ENCODE measurements at regions of chr2 and their contacts with region 1.

Region 1: DNA sequence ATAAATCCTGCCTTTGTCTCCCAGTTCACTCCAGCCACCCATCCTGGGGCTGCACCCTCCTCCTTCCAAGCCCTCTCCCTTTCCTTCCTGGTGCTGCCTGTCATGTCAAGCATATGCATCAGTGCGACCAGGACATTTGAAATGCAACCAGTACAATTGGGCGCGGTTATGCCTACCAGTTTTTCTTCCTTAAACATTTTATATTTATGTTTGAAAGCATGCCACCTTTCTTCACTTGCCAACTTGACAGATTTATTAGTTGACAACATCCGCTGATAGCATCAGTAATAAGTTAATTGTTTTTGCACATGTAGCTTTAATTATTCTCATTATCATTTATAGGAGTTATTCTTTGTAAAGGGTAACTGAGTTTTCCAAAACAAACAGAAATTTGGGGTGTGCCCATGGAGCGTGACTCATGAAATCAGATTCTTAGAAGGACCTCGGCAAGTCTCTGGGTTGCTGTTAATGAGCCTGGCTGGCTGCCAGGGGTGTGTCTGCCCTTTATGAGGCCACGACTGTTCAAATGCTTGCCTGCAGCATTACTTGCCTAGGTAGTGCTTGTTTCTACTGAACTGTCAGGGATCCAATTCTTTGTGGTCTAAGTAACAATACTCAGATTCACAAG is 32.8 kb upstream of the IL1B start:
- DNase-seq: peak; percentile 87
- ATAC-seq: no peak

Region 2: GRCh38 chr2:112764071-112765044 is 105.0 kb before region 1 on chr2 and contains the start of gene CKAP2L:
- intact Hi-C with region 1: loop called (anchors 5 kb)
- DNase-seq: peak; percentile 97
- ATAC-seq: peak; percentile 99
- total RNA-seq, gene CKAP2L: 1.3 TPM

Region 3: GRCh38 chr2:112811841-112812306 is 57.5 kb before region 1 on chr2:
- intact Hi-C with region 1: loop called (anchors 1 kb)
- DNase-seq: no peak
- ATAC-seq: peak; percentile 28

Region 4: DNA sequence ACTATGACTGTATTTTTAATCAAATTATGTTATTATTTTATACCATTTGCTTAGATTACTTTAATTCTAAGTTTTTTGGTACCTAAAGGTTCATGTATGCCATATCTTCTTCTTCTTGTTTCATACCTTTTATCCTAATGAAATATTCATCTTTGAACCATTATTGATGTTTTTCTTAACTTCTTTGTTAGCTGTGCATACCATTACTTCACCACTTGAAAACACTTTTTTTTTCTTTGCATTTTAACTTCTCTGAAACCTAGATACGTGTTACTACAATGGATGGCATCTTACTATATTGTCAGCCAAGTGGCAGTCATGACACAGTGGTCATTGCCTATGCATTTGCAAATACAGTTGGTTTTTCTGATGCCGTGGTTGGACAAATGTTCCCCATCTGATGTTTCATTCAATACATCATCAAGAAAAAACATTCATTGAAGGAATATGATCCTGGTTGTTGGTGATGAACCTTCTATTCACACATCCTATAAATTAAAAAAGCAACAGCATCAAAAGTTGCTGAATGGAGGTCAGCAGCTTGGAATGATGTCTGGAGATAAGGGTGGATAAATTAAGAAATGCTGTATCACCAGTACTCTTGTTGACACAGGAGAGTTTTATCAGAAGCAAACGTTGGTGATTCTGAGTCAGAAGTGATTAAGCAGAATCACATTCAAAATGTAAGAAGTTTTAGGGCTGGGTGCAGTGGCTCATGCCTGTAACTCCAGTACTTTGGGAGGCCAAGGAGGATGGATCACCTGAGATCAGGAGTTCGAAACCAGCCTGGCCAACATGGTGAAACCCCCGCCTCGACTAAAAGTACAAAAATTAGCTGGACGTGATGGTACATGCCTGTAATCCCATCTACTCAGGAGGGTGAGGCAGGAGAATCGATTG is 143.3 kb after region 1 on chr2:
- intact Hi-C with region 1: no loop called
- DNase-seq: no peak
- ATAC-seq: no peak

Region 5: GRCh38 chr2:113831161-113831560 is 961.8 kb after region 1 on chr2:
- intact Hi-C with region 1: no loop called
- DNase-seq: no peak
- ATAC-seq: no peak